ENCODE measurements at regions of chr12 and their contacts with region 1.

Region 1: GRCh38 chr12:53476769-53477209 is 22.5 kb downstream of the MAP3K12 start:
- DNase-seq: no peak
- ATAC-seq: peak; percentile 60
- H3K4me3 ChIP-seq: no peak overlapping the region
- H3K27ac ChIP-seq: no peak overlapping the region
- H3K4me1 ChIP-seq: 0 out of 2 replicates have a peak, but pooled peaks cover 2% of the 10 kb centered on the region
- H3K27me3 ChIP-seq: no peaks in the 10 kb centered on the region
- CTCF ChIP-seq: peak in 2 of 3 experiments; percentile 10 to 34; a peak in 2 of 6 replicates
- EP300 ChIP-seq: no peak
- POLR2A ChIP-seq: no peak
- RAD21 ChIP-seq: no peak

Region 2: DNA sequence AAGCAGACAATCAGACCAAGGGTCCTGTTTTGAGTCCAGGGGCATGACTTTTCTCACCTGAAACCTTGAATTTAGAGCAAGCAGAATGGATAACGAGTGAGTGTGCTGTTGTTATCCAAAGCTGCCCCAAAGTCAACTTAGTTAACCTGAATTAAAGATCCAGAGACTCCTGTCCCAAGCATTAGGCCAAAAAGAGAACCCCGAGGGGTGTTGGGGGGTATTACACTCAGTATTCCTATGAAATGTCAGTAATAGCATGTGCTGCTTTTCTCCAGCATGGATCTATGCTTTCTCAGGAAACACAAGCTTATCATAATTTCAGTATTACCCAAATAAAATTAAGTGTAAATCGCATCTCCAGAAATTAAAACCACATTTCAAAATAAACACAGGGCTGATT is 451.5 kb before region 1 on chr12:
- CTCF ChIA-PET with region 1: no interaction called
- POLR2A ChIA-PET with region 1: no interaction called
- RAD21 ChIA-PET with region 1: no interaction called
- SMC1A ChIA-PET with region 1: no interaction called
- in situ Hi-C with region 1: loop called (anchors 10 kb)
- intact Hi-C with region 1: no loop called
- DNase-seq: no peak
- ATAC-seq: no peak
- H3K4me3 ChIP-seq: no peak overlapping the region
- H3K27ac ChIP-seq: no peak overlapping the region
- H3K4me1 ChIP-seq: no peaks in the 10 kb centered on the region
- H3K27me3 ChIP-seq: no peaks in the 10 kb centered on the region
- CTCF ChIP-seq: 0 out of 6 replicates have a peak, but pooled peaks of 1 of the 3 experiments have one; percentile 2
- EP300 ChIP-seq: no peak
- POLR2A ChIP-seq: no peak
- RAD21 ChIP-seq: no peak

Region 3: GRCh38 chr12:53451661-53452158 is 25.1 kb before region 1 on chr12 and contains the start of gene PCBP2:
- CTCF ChIA-PET with region 1: interaction called, 30 read pairs
- POLR2A ChIA-PET with region 1: interaction called, 7 read pairs
- RAD21 ChIA-PET with region 1: no interaction called
- SMC1A ChIA-PET with region 1: interaction called, 4 read pairs
- in situ Hi-C with region 1: no loop called
- intact Hi-C with region 1: no loop called
- DNase-seq: peak; percentile 96
- ATAC-seq: peak; percentile 97
- H3K4me3 ChIP-seq: peak within 1 kb of the TSS; percentile 97
- H3K27ac ChIP-seq: peak within 1 kb of the TSS; percentile 92
- H3K4me1 ChIP-seq: peaks cover 5% of the 10 kb centered on the region
- H3K27me3 ChIP-seq: no peaks in the 10 kb centered on the region
- CTCF ChIP-seq: peak; percentile 92 to 97 (median 95)
- EP300 ChIP-seq: peak in 1 of 2 experiments; percentile 21; a peak in 1 of 4 replicates
- POLR2A ChIP-seq: peak; percentile 91
- RAD21 ChIP-seq: no peak
- polyA plus RNA-seq, gene PCBP2: 318 to 348 TPM

Region 4: DNA sequence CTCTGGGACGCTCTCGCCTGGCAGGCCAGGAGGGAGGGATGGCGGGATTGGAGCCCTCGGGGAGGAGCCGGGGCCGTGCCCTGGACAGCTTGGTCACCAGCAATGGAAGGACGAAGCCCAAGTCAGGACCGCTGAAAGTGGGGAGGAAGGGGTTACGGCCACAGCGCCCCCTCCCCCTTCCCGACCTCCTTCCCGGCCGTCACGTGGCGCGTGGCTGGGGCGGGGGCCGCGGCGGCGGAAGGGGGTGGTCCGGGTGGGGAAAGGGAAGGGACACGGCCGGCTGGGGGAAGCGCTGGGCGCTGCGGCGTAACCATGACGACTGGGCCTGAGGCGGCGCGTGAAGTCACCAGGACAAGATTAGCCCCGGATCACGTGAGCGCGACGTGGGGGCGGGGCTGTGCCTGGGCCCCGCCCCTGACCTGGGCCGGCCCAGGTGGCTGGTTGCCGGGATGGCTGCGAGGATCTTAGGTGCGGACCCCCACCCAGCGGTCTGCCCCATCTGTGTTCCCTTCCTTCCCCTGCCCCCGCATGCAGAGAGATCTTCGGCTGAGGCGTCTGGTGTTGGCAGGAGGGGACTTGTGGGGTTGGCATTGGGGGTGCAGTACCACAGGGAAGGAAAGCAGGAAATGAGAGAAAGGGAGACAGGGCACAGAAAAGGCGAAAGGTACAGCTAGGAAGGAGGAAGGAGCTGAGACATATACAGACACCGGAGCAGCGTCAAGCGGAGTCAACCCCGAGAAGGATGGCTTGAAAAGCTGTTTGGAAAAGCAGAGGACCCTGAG is 16.2 kb after region 1 on chr12:
- CTCF ChIA-PET with region 1: interaction called, 20 read pairs
- POLR2A ChIA-PET with region 1: interaction called, 6 read pairs
- RAD21 ChIA-PET with region 1: interaction called, 4 read pairs
- SMC1A ChIA-PET with region 1: interaction called, 7 read pairs
- in situ Hi-C with region 1: no loop called
- intact Hi-C with region 1: no loop called
- DNase-seq: peak; percentile 46
- ATAC-seq: peak; percentile 96
- H3K4me3 ChIP-seq: peak overlapping the region; percentile 87
- H3K27ac ChIP-seq: peak overlapping the region; percentile 46; the same call in 1 of the 2 replicates
- H3K4me1 ChIP-seq: peaks cover 10% of the 10 kb centered on the region
- H3K27me3 ChIP-seq: no peaks in the 10 kb centered on the region
- CTCF ChIP-seq: no peak
- EP300 ChIP-seq: no peak
- POLR2A ChIP-seq: peak; percentile 83
- RAD21 ChIP-seq: no peak

Measured in GM12878 (cell line).